Activated CD4-positive, alpha-beta T cell treated with anti-CD3 and anti-CD28 coated beads, Interleukin-2, amount 10 ng/mL, durations not matched to agents 24 days and 14 days (primary cell): ENCODE measurements at regions of chr16 and their contacts with region 1.

Region 1: GRCh38 chr16:14186007-14186794 is 115.1 kb downstream of the MRTFB start:
- DNase-seq: peak; percentile 70
- H3K4me3 Mint-ChIP-seq: peak overlapping the region; percentile 44
- H3K27ac Mint-ChIP-seq: peak overlapping the region; percentile 38
- H3K4me1 Mint-ChIP-seq: peaks cover 17% of the 10 kb centered on the region
- H3K27me3 Mint-ChIP-seq: peaks cover 2% of the 10 kb centered on the region

Region 2: DNA sequence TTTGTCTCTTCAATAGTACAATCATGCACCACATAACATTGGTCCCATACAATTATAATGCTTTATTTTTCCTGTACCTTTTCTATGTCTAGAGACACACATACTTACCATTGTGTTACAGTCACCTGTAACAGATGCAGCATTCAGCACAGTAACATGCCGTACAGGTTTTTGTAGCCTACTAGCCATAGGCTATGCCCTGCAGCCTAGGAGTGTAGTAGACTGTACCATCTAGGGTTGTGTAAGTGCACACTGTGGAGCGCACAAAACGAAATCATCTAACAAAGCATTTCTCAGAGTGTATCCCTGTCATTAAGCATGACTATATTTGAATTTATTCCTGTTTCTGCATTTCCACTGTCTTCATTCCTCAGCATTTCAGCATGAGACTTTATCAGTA is 50.9 kb before region 1 on chr16:
- intact Hi-C with region 1: loop called (anchors 5 kb)
- DNase-seq: no peak
- H3K4me3 Mint-ChIP-seq: no peak overlapping the region
- H3K27ac Mint-ChIP-seq: no peak overlapping the region
- H3K4me1 Mint-ChIP-seq: no peaks in the 10 kb centered on the region
- H3K27me3 Mint-ChIP-seq: no peaks in the 10 kb centered on the region